HAP-1 (cell line): ENCODE measurements at regions of chr18 and their contacts with region 1.

Region 1: GRCh38 chr18:4119813-4120212 is 335.3 kb downstream of the DLGAP1 start:
- DNase-seq: no peak
- H3K4me3 ChIP-seq: no peak overlapping the region
- H3K4me1 ChIP-seq: peaks cover 29% of the 10 kb centered on the region
- H3K27me3 ChIP-seq: no peaks in the 10 kb centered on the region

Region 2: DNA sequence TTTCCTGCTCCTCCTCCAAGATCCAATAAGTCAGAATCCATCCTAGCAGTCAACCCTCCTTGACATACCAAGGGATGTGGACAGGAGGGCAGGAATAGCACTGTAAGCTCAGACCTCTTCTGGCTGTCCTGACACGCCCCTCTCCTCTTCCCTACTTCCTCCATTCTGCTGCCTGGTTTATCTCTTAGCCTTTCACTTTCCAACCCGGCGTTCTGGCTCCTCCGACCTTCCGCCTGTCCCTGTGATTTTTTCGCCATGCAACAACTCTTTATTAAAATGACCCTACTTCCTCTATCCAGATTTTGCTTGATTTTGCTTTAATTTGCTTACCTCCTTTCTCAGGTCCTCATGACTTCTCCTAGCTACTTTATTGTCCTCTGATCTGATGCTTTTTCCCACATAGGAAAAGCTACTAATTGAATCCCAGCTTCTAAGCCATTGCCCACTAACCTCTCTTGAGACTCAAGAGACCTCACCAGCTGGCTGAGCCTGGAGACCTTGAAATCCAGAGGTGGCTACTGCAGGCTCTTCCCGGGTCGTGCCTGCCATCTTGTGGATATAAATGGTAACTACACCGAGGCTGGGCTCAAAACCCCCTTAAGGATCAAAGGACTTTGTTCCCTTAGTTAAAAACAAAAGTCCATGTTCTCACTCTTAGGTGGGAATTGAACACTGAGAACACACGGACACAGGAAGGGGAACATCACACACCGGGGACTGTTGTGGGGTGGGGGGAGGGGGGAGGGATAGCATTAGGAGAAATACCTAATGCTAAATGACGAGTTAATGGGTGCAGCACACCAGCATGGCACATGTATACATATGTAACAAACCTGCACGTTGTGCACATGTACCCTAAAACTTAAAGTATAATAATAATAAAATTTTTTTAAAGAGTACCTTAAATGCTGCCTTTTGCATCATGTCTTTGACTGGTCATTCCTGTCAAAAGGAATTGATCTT is 937.9 kb after region 1 on chr18:
- in situ Hi-C with region 1: loop called (anchors 10 kb)
- DNase-seq: peak; percentile 66 to 79
- H3K4me3 ChIP-seq: no peak overlapping the region
- H3K4me1 ChIP-seq: no peaks in the 10 kb centered on the region
- H3K27me3 ChIP-seq: no peaks in the 10 kb centered on the region